Naive thymus-derived CD4-positive, alpha-beta T cell (primary cell): ENCODE measurements at regions of chr12 and their contacts with region 1.

Region 1: DNA sequence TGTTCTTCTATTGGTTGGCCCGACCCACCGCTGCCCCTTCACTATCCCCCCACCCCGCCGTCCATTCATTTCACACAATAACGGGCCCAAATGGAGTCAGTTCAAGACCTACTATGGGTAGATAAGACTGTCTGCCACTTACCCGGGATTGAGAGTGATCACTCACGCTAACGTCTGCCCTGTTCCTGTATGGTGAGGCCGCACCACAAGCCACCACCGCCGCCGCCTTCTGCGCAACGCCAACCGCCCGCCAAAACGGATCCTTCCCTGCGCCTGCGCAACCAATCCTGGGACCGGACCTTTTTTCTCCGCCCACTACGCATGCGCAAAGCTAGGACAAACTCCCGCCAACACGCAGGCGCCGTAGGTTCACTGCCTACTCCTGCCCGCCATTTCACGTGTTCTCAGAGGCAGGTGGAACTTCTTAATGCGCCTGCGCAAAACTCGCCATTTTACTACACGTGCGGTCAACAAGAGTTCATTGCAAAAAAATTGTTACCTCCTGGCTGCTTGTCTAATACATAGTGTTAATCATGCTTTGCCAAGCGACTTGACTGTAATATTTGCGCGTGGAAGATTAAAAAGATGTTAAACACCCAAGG is at the start of gene CBX5:
- DNase-seq: peak; percentile 98 to 100 (median 100)
- ATAC-seq: peak; percentile 63
- H3K4me3 ChIP-seq: peak within 1 kb of the TSS; percentile 97
- H3K4me3 Mint-ChIP-seq: no peak within 1 kb of the TSS
- H3K27ac ChIP-seq: peak within 1 kb of the TSS; percentile 92
- H3K27ac Mint-ChIP-seq: no peak within 1 kb of the TSS
- H3K4me1 ChIP-seq: peaks cover 46 to 52% of the 10 kb centered on the region in 2 donors
- H3K4me1 Mint-ChIP-seq: peaks cover 16 to 57% (median 47%) of the 10 kb centered on the region in 7 donors
- H3K27me3 ChIP-seq: no peaks in the 10 kb centered on the region
- H3K27me3 Mint-ChIP-seq: no peaks in the 10 kb centered on the region
- total RNA-seq, gene CBX5: 40.3 to 133 (median 77.2) TPM

Region 2: DNA sequence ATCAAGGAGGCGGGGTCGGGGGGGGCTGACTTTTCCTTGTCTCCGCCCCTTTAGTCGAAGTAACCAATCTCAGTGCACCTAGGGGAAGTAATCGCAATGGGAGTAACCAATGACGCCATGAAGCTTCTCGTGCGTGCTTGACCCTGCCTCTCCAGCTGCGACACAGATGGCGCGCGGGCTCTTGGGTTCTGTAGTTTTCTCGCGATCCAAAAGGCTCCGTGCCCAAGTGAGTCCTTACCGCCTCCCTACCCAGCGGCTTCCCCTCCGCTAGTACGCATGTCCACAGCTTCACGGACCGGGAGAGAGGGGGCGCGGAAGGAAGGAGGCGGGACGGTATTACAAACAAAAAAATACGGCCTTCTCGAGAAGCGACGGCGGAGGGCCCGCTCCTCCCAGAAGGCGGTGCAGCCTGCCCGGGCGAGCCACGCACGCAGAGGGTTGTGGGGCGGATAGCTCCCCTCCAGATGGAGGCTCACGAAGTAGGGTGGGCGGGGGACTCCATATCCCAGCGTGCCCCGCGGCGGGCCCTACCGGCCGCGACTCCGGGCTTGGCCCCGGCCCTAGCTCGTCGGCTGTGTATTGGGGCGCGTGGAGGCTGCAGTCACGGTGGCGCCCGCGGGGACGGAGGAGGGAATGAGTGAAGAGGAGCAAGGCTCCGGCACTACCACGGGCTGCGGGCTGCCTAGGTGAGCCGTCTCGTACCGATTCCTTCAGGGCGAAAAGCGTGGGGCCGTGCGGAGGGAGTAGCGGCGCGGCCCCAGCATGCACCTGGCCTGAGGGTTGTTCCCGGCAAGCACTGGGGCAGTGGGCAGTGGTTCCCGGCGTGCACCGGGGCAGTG is 779.0 kb before region 1 on chr12 and contains the start of gene TARBP2:
- CTCF ChIA-PET with region 1: no interaction called
- POLR2A ChIA-PET with region 1: interaction called, 6 read pairs
- intact Hi-C with region 1: loop called in 1 of 2 experiments (anchors 1 kb)
- DNase-seq: peak; percentile 87 to 99 (median 98)
- ATAC-seq: peak; percentile 87
- H3K4me3 ChIP-seq: peak within 1 kb of the TSS; percentile 84
- H3K4me3 Mint-ChIP-seq: peak within 1 kb of the TSS; percentile 86 to 96 (median 92)
- H3K27ac ChIP-seq: peak within 1 kb of the TSS; percentile 98
- H3K27ac Mint-ChIP-seq: peak within 1 kb of the TSS; percentile 87 to 100 (median 97)
- H3K4me1 ChIP-seq: peaks cover 24 to 27% of the 10 kb centered on the region in 2 donors
- H3K4me1 Mint-ChIP-seq: peaks cover 15 to 56% (median 43%) of the 10 kb centered on the region in 7 donors
- H3K27me3 ChIP-seq: no peaks in the 10 kb centered on the region
- H3K27me3 Mint-ChIP-seq: no peaks in the 10 kb centered on the region
- total RNA-seq, gene TARBP2: 25.1 to 45.2 (median 40.7) TPM

Region 3: DNA sequence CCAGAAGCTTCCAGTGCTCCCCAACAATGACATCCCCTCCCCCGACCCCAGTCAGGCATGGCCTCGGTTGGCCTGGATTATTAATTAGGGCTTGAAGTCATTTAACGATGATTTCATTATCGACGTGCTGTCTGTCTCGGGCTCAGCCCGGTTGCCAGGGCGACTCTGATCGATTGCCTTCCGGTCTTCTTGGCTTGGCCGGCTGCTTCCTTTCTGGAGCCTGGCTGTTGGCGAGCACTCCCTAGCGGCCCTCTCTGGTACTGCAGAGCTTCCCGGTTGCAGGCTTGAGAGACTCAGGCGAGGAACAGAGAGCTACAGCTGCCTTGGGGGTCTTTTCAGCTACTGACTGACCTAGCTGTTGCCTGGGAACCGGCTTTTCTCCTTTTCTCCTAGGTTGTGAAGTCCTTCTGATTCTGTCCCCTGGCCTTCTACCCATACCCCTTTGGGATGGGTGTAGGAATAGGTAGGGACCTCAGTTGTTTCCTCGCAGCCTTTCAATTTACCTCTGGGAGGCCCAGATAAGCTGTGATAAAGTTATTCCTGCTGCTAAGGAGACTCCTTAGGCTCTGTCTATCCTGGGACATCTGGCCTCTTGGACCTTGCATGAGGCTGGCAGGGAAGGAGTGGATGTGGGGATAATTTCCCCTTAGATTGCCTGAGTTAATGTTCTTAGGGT is 522.7 kb before region 1 on chr12:
- CTCF ChIA-PET with region 1: no interaction called
- POLR2A ChIA-PET with region 1: no interaction called
- intact Hi-C with region 1: loop called in 1 of 2 experiments (anchors 10 kb)
- DNase-seq: peak; percentile 49 to 81 (median 69)
- ATAC-seq: peak; percentile 91
- H3K4me3 ChIP-seq: peak overlapping the region; percentile 25
- H3K4me3 Mint-ChIP-seq: peak overlapping the region in 9 of 10 donors; percentile 39 to 64 (median 52)
- H3K27ac ChIP-seq: no peak overlapping the region
- H3K27ac Mint-ChIP-seq: peak overlapping the region in 1 of 9 donors; percentile 74
- H3K4me1 ChIP-seq: peaks cover 0 to 6% of the 10 kb centered on the region in 2 donors
- H3K4me1 Mint-ChIP-seq: peaks cover 0 to 35% (median 5%) of the 10 kb centered on the region in 7 donors
- H3K27me3 ChIP-seq: peaks cover 0 to 10% of the 10 kb centered on the region in 2 donors
- H3K27me3 Mint-ChIP-seq: peaks cover 37 to 51% (median 42%) of the 10 kb centered on the region in 5 donors

Region 4: GRCh38 chr12:54147186-54147585 is 132.8 kb before region 1 on chr12:
- CTCF ChIA-PET with region 1: no interaction called
- POLR2A ChIA-PET with region 1: no interaction called
- intact Hi-C with region 1: no loop called
- DNase-seq: no peak
- ATAC-seq: no peak
- H3K4me3 ChIP-seq: no peak overlapping the region
- H3K4me3 Mint-ChIP-seq: no peak overlapping the region
- H3K27ac ChIP-seq: no peak overlapping the region
- H3K27ac Mint-ChIP-seq: no peak overlapping the region
- H3K4me1 ChIP-seq: no peaks in the 10 kb centered on the region
- H3K4me1 Mint-ChIP-seq: no peaks in the 10 kb centered on the region
- H3K27me3 ChIP-seq: no peaks in the 10 kb centered on the region
- H3K27me3 Mint-ChIP-seq: peaks cover 9 to 54% (median 41%) of the 10 kb centered on the region in 5 donors

Region 5: DNA sequence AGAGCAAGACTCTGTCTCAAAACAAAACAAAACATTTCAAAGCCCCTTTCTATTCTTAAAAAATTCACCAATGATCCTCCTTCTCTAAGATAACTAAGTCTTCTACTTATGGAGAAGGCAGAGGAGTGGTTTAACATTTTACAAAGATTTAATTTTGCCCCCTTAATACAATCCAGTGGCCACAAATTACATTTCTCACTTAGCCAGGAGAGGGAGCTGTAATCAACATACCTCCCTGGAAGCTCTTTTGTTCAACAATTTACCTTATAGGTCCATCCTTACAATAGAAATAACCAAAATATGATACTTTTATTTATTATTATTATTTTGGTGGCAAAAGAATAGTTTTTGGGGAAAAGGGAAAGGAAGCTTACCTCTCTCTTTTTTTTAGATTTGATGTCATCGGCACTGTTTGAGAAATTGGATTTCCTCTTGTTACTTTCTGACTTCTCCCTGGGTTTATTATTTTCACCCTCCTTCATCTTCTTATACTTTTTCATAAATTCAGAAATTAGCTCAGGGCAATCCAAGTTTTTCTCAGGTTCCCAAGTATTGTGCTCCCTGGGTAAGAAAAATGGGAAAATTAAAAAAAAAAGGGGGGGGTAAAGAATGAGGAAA is 28.2 kb before region 1 on chr12:
- CTCF ChIA-PET with region 1: interaction called, 5 read pairs
- POLR2A ChIA-PET with region 1: interaction called, 12 read pairs
- intact Hi-C with region 1: loop called in 1 of 2 experiments (anchors 2 kb)
- DNase-seq: peak in 7 of 9 donors; percentile 9 to 54 (median 47)
- ATAC-seq: peak; percentile 75
- H3K4me3 ChIP-seq: no peak overlapping the region
- H3K4me3 Mint-ChIP-seq: peak overlapping the region in 1 of 10 donors; percentile 18
- H3K27ac ChIP-seq: no peak overlapping the region
- H3K27ac Mint-ChIP-seq: peak overlapping the region in 2 of 9 donors; percentile 48 to 76
- H3K4me1 ChIP-seq: no peaks in the 10 kb centered on the region
- H3K4me1 Mint-ChIP-seq: peaks cover 7 to 23% (median 17%) of the 10 kb centered on the region in 7 donors
- H3K27me3 ChIP-seq: no peaks in the 10 kb centered on the region
- H3K27me3 Mint-ChIP-seq: no peaks in the 10 kb centered on the region

Region 6: DNA sequence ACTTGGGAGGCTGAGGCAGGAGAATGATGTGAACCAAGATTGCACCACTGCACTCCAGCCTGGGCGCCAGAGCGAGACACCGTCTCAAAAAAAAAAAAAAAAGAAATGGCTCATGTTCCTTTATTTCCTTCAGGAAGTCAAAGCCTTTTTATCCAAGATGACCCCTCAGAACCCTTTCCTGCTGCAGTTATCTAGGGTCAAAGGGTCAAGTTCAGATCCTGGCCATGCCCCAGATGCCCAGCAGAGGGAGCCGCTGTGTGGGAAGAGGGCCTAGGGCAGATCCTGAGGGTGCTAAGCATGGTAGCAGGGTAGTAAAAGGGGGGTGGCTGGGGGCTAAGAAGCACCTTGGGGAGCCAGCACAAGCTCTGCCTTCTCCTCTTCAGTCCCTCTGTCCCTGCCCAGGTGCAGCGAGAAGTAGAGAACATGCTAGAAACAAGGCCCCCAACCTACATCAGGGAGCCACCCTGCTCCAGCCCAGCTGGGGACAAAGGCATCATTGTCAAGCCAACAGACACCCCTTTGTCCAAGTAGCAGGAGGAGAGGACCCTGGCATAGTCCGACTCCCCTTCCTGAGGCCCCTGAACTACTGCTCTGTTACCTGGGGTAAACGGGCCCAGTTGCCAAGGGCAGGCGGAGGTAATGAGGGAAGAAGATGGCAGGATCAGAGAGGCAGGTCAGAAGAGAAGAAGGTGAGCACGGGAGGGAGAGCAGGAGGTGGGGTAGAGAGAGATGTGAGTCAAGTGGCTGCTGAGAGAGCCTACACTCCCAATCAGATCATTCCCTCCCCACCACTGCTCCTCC is 14.4 kb after region 1 on chr12:
- CTCF ChIA-PET with region 1: interaction called, 9 read pairs
- POLR2A ChIA-PET with region 1: interaction called, 59 read pairs
- intact Hi-C with region 1: no loop called
- DNase-seq: peak in 8 of 9 donors; percentile 22 to 70 (median 44)
- ATAC-seq: peak; percentile 76
- H3K4me3 ChIP-seq: no peak overlapping the region
- H3K4me3 Mint-ChIP-seq: no peak overlapping the region
- H3K27ac ChIP-seq: no peak overlapping the region
- H3K27ac Mint-ChIP-seq: no peak overlapping the region
- H3K4me1 ChIP-seq: no peaks in the 10 kb centered on the region
- H3K4me1 Mint-ChIP-seq: peaks cover 5 to 22% (median 6%) of the 10 kb centered on the region in 7 donors
- H3K27me3 ChIP-seq: no peaks in the 10 kb centered on the region
- H3K27me3 Mint-ChIP-seq: peaks cover 0 to 20% (median 5%) of the 10 kb centered on the region in 5 donors

Region 7: GRCh38 chr12:54359033-54359761 is 79.2 kb after region 1 on chr12:
- CTCF ChIA-PET with region 1: interaction called, 4 read pairs
- POLR2A ChIA-PET with region 1: interaction called, 68 read pairs
- intact Hi-C with region 1: loop called (anchors 1 kb)
- DNase-seq: peak; percentile 68 to 98 (median 94)
- ATAC-seq: peak; percentile 95
- H3K4me3 ChIP-seq: peak overlapping the region; percentile 88
- H3K4me3 Mint-ChIP-seq: no peak overlapping the region
- H3K27ac ChIP-seq: peak overlapping the region; percentile 85
- H3K27ac Mint-ChIP-seq: no peak overlapping the region
- H3K4me1 ChIP-seq: peaks cover 5 to 18% of the 10 kb centered on the region in 2 donors
- H3K4me1 Mint-ChIP-seq: peaks cover 11 to 29% (median 19%) of the 10 kb centered on the region in 7 donors
- H3K27me3 ChIP-seq: no peaks in the 10 kb centered on the region
- H3K27me3 Mint-ChIP-seq: no peaks in the 10 kb centered on the region

Region 8: DNA sequence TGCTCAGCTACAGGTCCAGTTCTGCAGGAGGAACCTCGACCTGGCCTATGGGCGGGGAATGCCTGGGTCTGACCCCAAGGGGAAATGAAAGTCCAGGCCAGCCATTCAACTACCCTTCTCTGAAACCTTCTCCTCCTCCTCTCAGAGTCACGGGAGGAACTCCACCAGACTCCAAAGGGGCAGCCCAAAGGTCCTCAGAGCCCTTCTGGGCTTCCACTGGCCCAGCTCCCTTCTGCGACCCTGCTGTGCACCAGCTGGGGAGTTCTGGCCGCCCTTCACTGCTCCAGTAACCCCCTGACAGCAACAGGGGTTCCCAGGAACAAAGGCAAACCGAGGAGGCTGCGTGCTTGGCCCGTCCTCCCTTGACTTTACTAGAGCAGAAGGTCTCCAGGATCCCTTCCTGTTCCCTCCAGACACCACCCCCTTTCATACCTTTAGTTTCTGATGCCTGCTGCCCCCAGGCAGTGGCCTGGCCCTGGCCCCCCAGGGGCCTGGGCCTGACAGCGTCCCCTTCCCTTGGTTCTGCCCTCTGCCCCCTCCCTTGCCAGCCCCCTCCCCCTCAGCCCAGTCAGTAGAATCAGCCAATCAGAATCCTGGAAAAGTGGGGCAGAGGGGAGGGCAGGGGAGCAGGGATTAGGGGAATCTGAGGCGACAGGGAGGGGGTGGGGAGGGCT is 105.4 kb after region 1 on chr12:
- CTCF ChIA-PET with region 1: no interaction called
- POLR2A ChIA-PET with region 1: no interaction called
- intact Hi-C with region 1: no loop called
- DNase-seq: no peak
- ATAC-seq: peak; percentile 39
- H3K4me3 ChIP-seq: no peak overlapping the region
- H3K4me3 Mint-ChIP-seq: no peak overlapping the region
- H3K27ac ChIP-seq: no peak overlapping the region
- H3K27ac Mint-ChIP-seq: no peak overlapping the region
- H3K4me1 ChIP-seq: no peaks in the 10 kb centered on the region
- H3K4me1 Mint-ChIP-seq: peaks cover 7 to 15% (median 13%) of the 10 kb centered on the region in 7 donors
- H3K27me3 ChIP-seq: no peaks in the 10 kb centered on the region
- H3K27me3 Mint-ChIP-seq: no peaks in the 10 kb centered on the region

Region 9: GRCh38 chr12:54411391-54412241 is 131.6 kb after region 1 on chr12:
- CTCF ChIA-PET with region 1: no interaction called
- POLR2A ChIA-PET with region 1: interaction called, 8 read pairs
- intact Hi-C with region 1: loop called (anchors 1 kb)
- DNase-seq: peak; percentile 44 to 66 (median 58)
- ATAC-seq: peak; percentile 72
- H3K4me3 ChIP-seq: peak overlapping the region; percentile 84
- H3K4me3 Mint-ChIP-seq: peak overlapping the region; percentile 80 to 92 (median 87)
- H3K27ac ChIP-seq: peak overlapping the region; percentile 96
- H3K27ac Mint-ChIP-seq: peak overlapping the region; percentile 89 to 100 (median 98)
- H3K4me1 ChIP-seq: peaks cover 58 to 66% of the 10 kb centered on the region in 2 donors
- H3K4me1 Mint-ChIP-seq: peaks cover 46 to 97% (median 72%) of the 10 kb centered on the region in 7 donors
- H3K27me3 ChIP-seq: no peaks in the 10 kb centered on the region
- H3K27me3 Mint-ChIP-seq: no peaks in the 10 kb centered on the region